Ascending aorta (tissue), 2 donors: ENCODE measurements at regions of chr6 and their contacts with region 1.

Region 1: GRCh38 chr6:12233693-12234571 is 56.2 kb upstream of the EDN1 start:
- DNase-seq: peak in 1 of 2 donors; percentile 68
- H3K4me3 ChIP-seq: no peak overlapping the region
- H3K27ac ChIP-seq: peak overlapping the region in 1 of 2 donors; percentile 23
- H3K4me1 ChIP-seq: peaks cover 0 to 2% of the 10 kb centered on the region in 2 donors
- H3K27me3 ChIP-seq: no peaks in the 10 kb centered on the region
- CTCF ChIP-seq: peak; percentile 76 to 86 (median 85)

Region 2: GRCh38 chr6:11353921-11354389 is 880.0 kb before region 1 on chr6:
- intact Hi-C with region 1: no loop called
- DNase-seq: peak; percentile 79 to 93
- H3K4me3 ChIP-seq: no peak overlapping the region
- H3K27ac ChIP-seq: peak overlapping the region; percentile 92 to 95
- H3K4me1 ChIP-seq: peaks cover 12 to 25% of the 10 kb centered on the region in 2 donors
- H3K27me3 ChIP-seq: no peaks in the 10 kb centered on the region
- CTCF ChIP-seq: no peak

Region 3: GRCh38 chr6:11585426-11586016 is 648.4 kb before region 1 on chr6:
- intact Hi-C with region 1: loop called (anchors 1 kb)
- DNase-seq: no peak
- H3K4me3 ChIP-seq: no peak overlapping the region
- H3K27ac ChIP-seq: no peak overlapping the region
- H3K4me1 ChIP-seq: peaks cover 0 to 21% of the 10 kb centered on the region in 2 donors
- H3K27me3 ChIP-seq: no peaks in the 10 kb centered on the region
- CTCF ChIP-seq: peak; percentile 52 to 68 (median 58)

Region 4: DNA sequence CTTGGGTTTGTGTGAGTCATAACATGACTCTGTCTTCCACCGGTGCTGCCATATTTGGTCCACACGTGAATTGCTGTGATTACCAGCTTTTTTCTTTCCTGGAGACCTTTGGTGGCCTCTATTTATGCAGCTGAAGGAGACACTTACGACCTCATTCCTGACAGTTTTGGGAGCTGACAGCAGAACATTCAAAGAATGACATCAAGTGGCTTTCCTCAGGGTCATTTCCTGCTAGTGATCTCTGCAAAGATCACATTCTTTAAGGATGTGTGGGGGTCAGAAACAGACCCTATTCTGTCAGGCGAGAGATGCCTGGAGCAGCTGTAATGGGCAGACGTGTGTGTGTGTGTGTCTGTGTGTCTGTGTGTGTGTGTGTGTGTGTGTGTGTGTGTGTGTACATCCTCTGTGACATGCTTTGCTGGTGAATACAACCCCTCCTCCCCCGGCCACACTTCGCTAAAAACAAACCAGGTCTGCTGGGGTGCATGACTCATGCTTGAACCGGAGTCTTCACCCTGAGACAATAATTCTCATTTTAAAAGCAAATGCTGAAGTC is 580.8 kb before region 1 on chr6:
- intact Hi-C with region 1: loop called (anchors 1 kb)
- DNase-seq: no peak
- H3K4me3 ChIP-seq: no peak overlapping the region
- H3K27ac ChIP-seq: no peak overlapping the region
- H3K4me1 ChIP-seq: peaks cover 0 to 28% of the 10 kb centered on the region in 2 donors
- H3K27me3 ChIP-seq: no peaks in the 10 kb centered on the region
- CTCF ChIP-seq: no peak

Region 5: DNA sequence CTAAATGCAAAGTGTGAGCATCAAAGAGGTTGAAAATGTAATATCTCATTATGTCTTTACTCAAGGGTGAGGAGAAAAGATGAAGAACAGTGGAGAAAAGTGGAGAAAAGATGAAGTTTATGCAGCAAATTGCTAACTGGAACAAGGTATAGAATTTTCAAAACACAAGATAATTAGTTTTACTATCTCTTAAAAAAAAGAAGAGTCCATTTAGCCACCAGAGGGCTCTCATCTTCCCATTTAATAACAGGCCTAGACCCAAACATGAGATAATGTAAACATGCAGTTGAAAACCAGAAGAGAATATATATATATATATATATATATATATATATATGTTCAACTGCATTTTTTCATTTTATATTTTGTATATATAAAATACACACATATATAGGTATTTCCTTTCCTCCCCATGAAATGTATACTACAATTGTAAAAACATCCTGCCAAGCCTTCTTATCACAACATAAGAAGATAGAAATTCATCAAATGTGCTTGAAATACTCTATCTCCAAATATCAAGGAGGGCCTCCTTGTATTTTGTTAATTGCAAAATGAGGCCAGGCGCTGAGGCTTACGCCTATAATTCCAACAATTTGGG is 533.7 kb before region 1 on chr6:
- intact Hi-C with region 1: loop called (anchors 1 kb)
- DNase-seq: no peak
- H3K4me3 ChIP-seq: no peak overlapping the region
- H3K27ac ChIP-seq: no peak overlapping the region
- H3K4me1 ChIP-seq: no peaks in the 10 kb centered on the region
- H3K27me3 ChIP-seq: no peaks in the 10 kb centered on the region
- CTCF ChIP-seq: peak in 2 of 3 experiments; percentile 30 to 53

Region 6: DNA sequence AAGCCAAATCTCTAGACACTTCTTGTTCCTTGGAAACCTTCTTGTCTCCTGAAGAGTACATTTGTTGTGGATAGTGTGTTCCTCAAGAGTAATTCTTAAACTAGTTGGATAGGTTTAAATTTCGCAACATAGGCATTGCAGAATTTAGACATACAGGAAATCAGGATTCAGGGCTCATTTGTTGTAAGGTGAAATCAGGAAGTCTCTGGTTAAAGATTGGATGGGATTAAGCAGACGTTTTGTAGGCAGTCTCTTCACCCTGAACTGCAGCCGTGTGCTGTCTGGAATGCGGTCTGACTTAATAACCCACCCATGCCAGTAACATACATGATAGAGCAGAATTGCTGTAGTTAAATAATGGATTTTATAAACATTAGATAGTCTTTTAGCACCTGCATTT is 200.2 kb before region 1 on chr6:
- intact Hi-C with region 1: loop called (anchors 10 kb)
- DNase-seq: no peak
- H3K4me3 ChIP-seq: no peak overlapping the region
- H3K27ac ChIP-seq: no peak overlapping the region
- H3K4me1 ChIP-seq: peaks cover 0 to 13% of the 10 kb centered on the region in 2 donors
- H3K27me3 ChIP-seq: no peaks in the 10 kb centered on the region
- CTCF ChIP-seq: no peak